CD8-positive, alpha-beta T cell (primary cell): ENCODE measurements at regions of chr17 and their contacts with region 1.

Region 1: GRCh38 chr17:63478791-63479494 is 2.1 kb downstream of the ACE start:
- DNase-seq: peak; percentile 60 to 84 (median 78)
- ATAC-seq: peak; percentile 81
- H3K4me3 ChIP-seq: no peak overlapping the region
- H3K4me3 Mint-ChIP-seq: peak overlapping the region; percentile 57
- H3K27ac ChIP-seq: no peak overlapping the region
- H3K27ac Mint-ChIP-seq: no peak overlapping the region
- H3K4me1 ChIP-seq: peaks cover 14% of the 10 kb centered on the region
- H3K4me1 Mint-ChIP-seq: peaks cover 11% of the 10 kb centered on the region
- H3K27me3 ChIP-seq: peaks cover 14% of the 10 kb centered on the region in 2 experiments
- H3K27me3 Mint-ChIP-seq: peaks cover 26% of the 10 kb centered on the region
- CTCF ChIP-seq: peak; percentile 61

Region 2: DNA sequence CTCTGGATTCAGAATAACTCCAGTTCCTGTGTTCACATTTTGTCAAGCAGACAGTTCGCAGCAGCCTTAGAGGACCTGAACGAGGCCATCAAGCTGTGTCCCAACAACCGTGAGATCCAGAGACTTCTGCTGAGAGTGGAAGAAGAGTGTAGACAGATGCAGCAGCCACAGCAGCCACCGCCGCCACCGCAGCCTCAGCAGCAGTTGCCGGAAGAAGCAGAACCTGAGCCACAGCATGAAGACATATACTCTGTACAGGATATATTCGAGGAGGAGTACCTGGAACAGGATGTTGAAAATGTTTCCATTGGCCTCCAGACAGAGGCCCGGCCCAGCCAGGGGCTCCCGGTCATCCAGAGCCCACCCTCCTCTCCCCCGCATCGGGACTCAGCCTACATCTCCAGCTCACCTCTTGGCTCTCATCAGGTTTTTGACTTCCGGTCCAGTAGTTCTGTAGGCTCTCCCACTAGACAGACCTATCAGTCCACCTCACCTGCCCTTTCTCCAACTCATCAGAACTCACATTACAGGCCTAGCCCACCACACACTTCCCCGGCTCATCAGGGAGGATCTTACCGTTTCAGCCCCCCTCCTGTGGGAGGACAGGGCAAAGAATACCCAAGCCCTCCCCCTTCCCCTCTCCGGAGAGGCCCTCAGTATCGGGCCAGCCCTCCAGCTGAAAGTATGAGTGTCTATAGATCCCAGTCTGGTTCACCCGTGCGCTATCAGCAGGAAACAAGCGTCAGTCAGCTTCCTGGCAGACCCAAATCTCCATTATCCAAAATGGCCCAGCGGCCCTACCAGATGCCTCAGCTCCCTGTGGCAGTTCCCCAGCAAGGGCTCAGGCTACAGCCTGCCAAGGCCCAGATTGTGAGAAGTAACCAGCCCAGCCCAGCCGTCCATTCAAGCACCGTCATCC is 58.7 kb before region 1 on chr17:
- CTCF ChIA-PET with region 1: interaction called, 282 read pairs
- POLR2A ChIA-PET with region 1: interaction called, 3 read pairs
- intact Hi-C with region 1: loop called (anchors 1 kb)
- DNase-seq: peak in 7 of 9 experiments; percentile 14 to 66 (median 40)
- ATAC-seq: peak; percentile 85
- H3K4me3 ChIP-seq: no peak overlapping the region
- H3K4me3 Mint-ChIP-seq: peak overlapping the region; percentile 51
- H3K27ac ChIP-seq: no peak overlapping the region
- H3K27ac Mint-ChIP-seq: peak overlapping the region; percentile 79
- H3K4me1 ChIP-seq: peaks cover 14% of the 10 kb centered on the region
- H3K4me1 Mint-ChIP-seq: peaks cover 21% of the 10 kb centered on the region
- H3K27me3 ChIP-seq: no peaks in the 10 kb centered on the region
- H3K27me3 Mint-ChIP-seq: no peaks in the 10 kb centered on the region
- CTCF ChIP-seq: no peak

Region 3: DNA sequence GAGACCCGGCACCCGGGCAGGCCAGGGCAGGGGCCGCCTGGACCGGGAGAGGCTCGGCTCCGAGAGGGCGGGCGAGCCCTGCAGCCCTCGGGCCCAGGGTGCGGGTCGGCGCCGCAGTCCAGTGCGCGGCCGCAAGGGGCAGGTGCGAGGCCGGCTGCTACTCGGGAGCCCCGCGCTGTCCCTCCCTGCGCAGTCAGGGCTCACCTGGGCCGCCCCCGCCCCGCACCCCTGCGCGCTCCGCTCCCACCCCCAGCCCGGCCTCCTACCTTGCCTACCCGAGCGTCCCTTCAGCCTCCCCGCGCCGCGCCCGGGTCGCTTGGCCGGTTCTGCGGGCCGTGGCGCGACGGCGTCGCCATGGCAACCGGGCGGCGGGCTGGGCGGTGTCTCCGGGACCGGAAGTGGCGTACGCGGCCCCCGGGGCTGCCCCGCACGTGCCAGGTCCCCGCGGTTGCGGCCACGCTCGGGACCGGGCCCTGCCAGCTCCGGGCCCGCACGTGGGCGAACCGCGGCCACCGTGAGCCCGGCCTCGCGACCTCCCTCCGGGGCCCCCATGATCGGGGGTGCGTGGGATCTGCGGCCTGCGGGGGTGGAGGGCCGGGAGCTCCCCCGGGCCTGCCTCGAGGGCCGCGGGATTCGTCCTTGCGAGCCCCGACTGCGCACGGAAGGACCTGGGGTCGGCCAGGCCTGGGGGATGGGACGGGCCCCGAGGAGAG is 32.8 kb before region 1 on chr17 and contains the start of gene CYB561:
- CTCF ChIA-PET with region 1: interaction called, 50 read pairs
- POLR2A ChIA-PET with region 1: interaction called, 3 read pairs
- intact Hi-C with region 1: loop called (anchors 1 to 5 kb)
- DNase-seq: peak; percentile 41 to 87 (median 65)
- ATAC-seq: peak; percentile 65
- H3K4me3 ChIP-seq: peak within 1 kb of the TSS; percentile 59 to 61
- H3K4me3 Mint-ChIP-seq: peak within 1 kb of the TSS; percentile 77
- H3K27ac ChIP-seq: peak within 1 kb of the TSS; percentile 49 to 90
- H3K27ac Mint-ChIP-seq: peak within 1 kb of the TSS; percentile 83
- H3K4me1 ChIP-seq: peaks cover 12% of the 10 kb centered on the region
- H3K4me1 Mint-ChIP-seq: peaks cover 33% of the 10 kb centered on the region
- H3K27me3 ChIP-seq: no peaks in the 10 kb centered on the region
- H3K27me3 Mint-ChIP-seq: no peaks in the 10 kb centered on the region
- CTCF ChIP-seq: peak; percentile 27
- total RNA-seq, gene CYB561: 13.7 to 14.9 TPM